Cardiac septum (tissue), 1 donor: ENCODE measurements at regions of chr12 and their contacts with region 1.

Region 1: GRCh38 chr12:6278439-6279255 is 31.8 kb upstream of the PLEKHG6 start:
- DNase-seq: peak; percentile 91

Region 2: GRCh38 chr12:5988659-5989116 is 290.0 kb before region 1 on chr12:
- intact Hi-C with region 1: loop called (anchors 5 kb)
- DNase-seq: peak; percentile 87

Region 3: GRCh38 chr12:6161124-6161882 is 117.3 kb before region 1 on chr12:
- intact Hi-C with region 1: no loop called
- DNase-seq: no peak

Region 4: GRCh38 chr12:6195665-6196535 is 82.7 kb before region 1 on chr12:
- intact Hi-C with region 1: loop called (anchors 1 kb)
- DNase-seq: peak; percentile 92

Region 5: GRCh38 chr12:6230321-6231110 is 48.1 kb before region 1 on chr12:
- intact Hi-C with region 1: loop called (anchors 2 kb)
- DNase-seq: peak; percentile 89